ENCODE measurements at regions of chr1 and their contacts with region 1.

Region 1: DNA sequence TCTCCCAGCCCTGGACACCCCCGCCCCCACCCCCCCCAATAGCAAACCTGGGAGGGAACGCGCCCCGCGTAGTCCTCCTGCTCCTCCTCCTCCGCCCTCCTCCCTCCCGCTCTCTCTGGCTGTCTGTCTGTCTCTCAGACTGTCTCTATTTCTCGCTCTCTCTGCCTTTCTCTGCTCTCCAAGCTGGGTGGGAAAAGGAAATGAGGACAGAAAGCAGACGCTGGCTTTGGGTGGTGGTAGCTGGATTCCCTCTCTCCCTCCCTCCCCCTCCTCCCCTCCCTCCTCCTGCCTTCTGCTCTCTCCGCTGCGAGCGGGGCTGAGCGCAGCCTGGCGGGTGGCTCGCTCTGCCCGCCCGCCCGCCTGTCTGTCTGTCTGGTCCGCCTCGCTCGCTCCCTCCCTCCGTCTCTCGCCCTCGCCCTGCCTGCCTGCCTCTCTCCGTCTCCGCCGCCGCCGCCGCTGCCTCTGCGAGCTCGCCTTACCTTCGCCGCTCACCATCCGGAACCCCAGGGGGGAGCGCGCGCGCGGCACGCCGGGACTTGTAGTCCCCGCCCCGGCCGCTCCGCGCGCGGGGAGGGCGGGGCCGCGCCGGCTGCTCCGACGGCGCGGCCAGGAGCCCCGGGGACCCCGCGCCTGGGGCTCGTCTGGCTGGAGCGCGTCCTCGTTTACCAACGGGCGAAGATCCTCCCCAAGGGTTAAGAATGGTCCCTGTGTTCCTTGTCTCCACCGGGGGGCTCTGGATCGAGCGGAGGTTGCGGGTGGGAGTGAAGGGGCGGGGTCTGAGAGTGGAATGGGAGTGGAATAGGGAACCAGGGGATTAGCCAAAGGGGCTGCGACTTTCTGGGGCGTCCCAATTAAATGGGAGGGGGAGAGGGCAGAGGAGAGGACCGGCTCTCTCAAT is at the start of gene AHDC1:
- DNase-seq: peak; percentile 94
- ATAC-seq: peak; percentile 88
- H3K4me3 Mint-ChIP-seq: peak within 1 kb of the TSS; percentile 88
- H3K27ac Mint-ChIP-seq: peak within 1 kb of the TSS; percentile 82
- H3K4me1 Mint-ChIP-seq: peaks cover 45% of the 10 kb centered on the region
- H3K27me3 Mint-ChIP-seq: no peaks in the 10 kb centered on the region
- total RNA-seq, gene AHDC1: 20.9 to 22.7 TPM

Region 2: GRCh38 chr1:27357281-27358037 is 246.5 kb before region 1 on chr1:
- CTCF ChIA-PET with region 1: interaction called, 15 read pairs
- POLR2A ChIA-PET with region 1: no interaction called
- DNase-seq: peak; percentile 90
- ATAC-seq: peak; percentile 82
- H3K4me3 Mint-ChIP-seq: peak overlapping the region; percentile 78
- H3K27ac Mint-ChIP-seq: peak overlapping the region; percentile 97
- H3K4me1 Mint-ChIP-seq: peaks cover 48% of the 10 kb centered on the region
- H3K27me3 Mint-ChIP-seq: peaks cover 9% of the 10 kb centered on the region

Region 3: GRCh38 chr1:27416387-27417111 is 187.4 kb before region 1 on chr1:
- CTCF ChIA-PET with region 1: interaction called, 61 read pairs
- POLR2A ChIA-PET with region 1: no interaction called
- DNase-seq: peak; percentile 72
- ATAC-seq: peak; percentile 77
- H3K4me3 Mint-ChIP-seq: no peak overlapping the region
- H3K27ac Mint-ChIP-seq: peak overlapping the region; percentile 1
- H3K4me1 Mint-ChIP-seq: peaks cover 24% of the 10 kb centered on the region
- H3K27me3 Mint-ChIP-seq: no peaks in the 10 kb centered on the region

Region 4: GRCh38 chr1:27568300-27569087 is 35.4 kb before region 1 on chr1:
- CTCF ChIA-PET with region 1: interaction called, 87 read pairs
- POLR2A ChIA-PET with region 1: no interaction called
- DNase-seq: peak; percentile 94
- ATAC-seq: peak; percentile 98
- H3K4me3 Mint-ChIP-seq: peak overlapping the region; percentile 64
- H3K27ac Mint-ChIP-seq: peak overlapping the region; percentile 46
- H3K4me1 Mint-ChIP-seq: peaks cover 29% of the 10 kb centered on the region
- H3K27me3 Mint-ChIP-seq: no peaks in the 10 kb centered on the region

Region 5: DNA sequence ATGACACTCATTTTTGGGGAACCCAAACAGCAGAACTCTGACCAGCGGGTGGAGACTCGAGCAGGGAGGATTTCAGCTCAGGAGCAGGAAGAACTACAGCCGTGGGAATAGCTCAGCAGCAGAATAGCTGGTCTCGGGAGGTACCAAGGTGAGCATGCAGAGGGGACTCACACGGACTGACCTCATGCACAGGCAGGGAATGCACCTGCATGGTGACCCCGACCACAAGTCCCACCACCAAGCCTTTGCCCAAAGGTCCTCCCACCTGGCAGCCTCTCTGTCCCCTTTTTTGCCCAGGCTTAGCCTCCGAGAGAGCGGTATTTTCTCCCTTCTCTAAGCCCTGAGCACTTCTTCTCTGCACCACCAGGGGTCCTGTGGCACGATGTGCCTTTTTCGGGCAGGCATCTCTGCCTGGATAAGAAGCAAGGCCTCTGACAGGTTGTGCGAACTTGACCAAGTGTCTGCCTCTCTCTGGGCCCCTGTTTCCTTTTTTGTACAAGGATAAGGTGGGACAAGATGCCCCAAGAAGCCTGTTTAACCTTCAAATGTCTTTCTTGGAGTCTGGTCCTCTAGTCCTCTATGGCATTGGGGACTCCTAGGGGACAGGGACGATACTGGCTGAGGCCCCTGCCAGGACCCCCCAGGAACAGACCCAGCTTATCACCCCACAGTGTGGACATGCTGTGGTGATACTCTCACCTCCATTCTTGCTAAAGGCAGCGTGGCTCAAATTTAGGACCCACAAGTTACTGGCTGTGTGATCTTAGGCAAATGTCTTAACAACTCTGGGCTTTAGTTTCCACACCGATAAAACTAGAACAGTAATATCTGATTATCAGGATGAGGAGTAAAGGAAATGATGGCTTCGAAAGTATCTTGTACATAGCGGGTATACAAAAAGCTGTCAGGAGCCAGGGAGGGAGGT is 40.0 kb after region 1 on chr1:
- CTCF ChIA-PET with region 1: interaction called, 10 read pairs
- POLR2A ChIA-PET with region 1: no interaction called
- DNase-seq: peak; percentile 76
- ATAC-seq: peak; percentile 97
- H3K4me3 Mint-ChIP-seq: no peak overlapping the region
- H3K27ac Mint-ChIP-seq: no peak overlapping the region
- H3K4me1 Mint-ChIP-seq: peaks cover 21% of the 10 kb centered on the region
- H3K27me3 Mint-ChIP-seq: no peaks in the 10 kb centered on the region

Region 6: DNA sequence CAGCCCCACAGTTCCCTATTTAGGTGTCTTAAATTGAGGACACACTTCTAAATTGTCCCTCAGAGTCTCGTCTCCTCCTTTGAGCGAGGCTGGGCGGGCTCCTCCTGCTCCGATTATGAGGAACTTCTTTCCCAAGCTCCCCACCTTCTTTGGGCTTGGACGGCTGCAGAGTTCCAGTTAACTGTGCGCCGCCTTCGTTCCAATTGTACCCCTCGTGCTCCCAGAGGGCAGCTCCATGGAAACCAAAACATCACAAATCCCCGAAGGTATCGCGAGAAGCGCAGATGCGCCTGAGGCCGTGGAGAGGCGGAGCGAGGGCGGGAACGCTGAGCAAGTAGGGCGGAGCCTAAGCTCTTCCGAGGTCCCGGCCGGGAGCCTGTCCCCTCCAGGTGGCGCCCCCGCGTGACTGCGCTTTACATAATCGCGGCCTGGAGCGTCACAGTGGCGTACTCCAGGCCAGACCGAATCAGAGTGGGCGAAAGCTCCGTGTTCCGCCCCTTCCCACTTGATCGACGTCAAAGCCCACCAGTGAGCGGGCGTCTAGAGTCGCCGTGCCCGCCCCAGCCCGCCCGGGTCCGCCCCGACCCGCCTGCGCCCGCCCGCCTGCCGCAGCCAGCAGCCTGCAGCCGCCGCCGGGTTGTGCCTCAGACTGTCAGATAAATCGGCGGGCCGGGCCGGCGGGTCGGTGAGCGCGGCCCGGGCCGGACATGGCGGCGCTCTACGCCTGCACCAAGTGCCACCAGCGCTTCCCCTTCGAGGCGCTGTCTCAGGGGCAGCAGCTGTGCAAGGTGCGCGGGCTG is 121.6 kb after region 1 on chr1 and contains the start of gene FAM76A:
- CTCF ChIA-PET with region 1: interaction called, 16 read pairs
- POLR2A ChIA-PET with region 1: no interaction called
- DNase-seq: peak; percentile 100
- ATAC-seq: peak; percentile 94
- H3K4me3 Mint-ChIP-seq: peak within 1 kb of the TSS; percentile 86
- H3K27ac Mint-ChIP-seq: peak within 1 kb of the TSS; percentile 93
- H3K4me1 Mint-ChIP-seq: peaks cover 21% of the 10 kb centered on the region
- H3K27me3 Mint-ChIP-seq: no peaks in the 10 kb centered on the region
- total RNA-seq, gene FAM76A: 14.6 to 17.5 TPM